GM18951 (cell line): ENCODE measurements at regions of chr1 and their contacts with region 1.

Region 1: GRCh38 chr1:167533851-167534300 is 15.5 kb upstream of the CD247 start:
- POLR2A ChIP-seq: no peak

Region 2: DNA sequence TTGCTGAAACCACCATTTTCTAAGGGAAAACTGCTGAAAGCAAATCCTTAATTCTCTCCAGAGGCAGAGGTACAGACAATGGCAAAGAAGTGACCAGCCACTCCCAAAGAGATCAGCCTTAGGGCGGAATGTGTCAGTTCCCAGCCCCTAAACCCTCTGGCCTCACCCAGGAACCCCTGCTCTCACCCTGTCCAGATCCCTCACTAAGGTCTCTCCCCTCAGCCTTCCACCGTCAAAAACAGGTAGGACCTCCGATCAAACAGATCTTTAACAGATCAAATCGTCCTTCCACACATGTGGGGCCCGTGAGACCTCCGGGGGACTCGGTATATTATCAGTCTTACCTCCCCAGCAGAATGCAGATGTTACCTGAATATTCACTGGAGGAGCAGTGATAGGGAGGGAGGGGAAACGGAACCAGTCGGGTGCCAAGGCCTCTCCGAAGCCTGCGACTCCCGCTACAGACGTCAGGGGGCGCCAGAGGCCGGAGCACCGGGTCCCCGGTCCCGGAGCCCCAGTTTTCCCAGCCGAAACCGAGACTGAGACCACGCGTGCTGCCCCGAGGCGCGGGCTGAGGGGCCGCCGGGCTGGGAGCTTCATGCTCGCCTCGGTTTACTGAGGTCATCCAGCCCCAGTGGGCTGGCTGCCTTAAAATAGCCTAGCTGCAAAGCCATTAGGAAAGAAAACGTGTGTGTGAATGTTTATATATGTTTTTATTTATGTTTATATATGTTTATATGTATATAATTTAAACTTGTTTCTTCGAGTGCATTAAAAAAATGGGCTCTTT is 467.3 kb before region 1 on chr1:
- in situ Hi-C with region 1: loop called (anchors 10 kb)
- POLR2A ChIP-seq: no peak

Region 3: GRCh38 chr1:167263819-167264464 is 269.9 kb before region 1 on chr1:
- in situ Hi-C with region 1: loop called (anchors 10 kb)
- POLR2A ChIP-seq: no peak